Activated T-helper 2 cell treated with anti-CD3 and anti-CD28 coated beads, Interferon-gamma antibody, Interleukin-2, Interleukin-4, amounts not matched to agents 10 μg/mL and 5 μg/mL and 100 μg/mL, durations not matched to agents 14 hours and 24 hours and 36 hours (primary cell): ENCODE measurements at regions of chr15 and their contacts with region 1.

Region 1: DNA sequence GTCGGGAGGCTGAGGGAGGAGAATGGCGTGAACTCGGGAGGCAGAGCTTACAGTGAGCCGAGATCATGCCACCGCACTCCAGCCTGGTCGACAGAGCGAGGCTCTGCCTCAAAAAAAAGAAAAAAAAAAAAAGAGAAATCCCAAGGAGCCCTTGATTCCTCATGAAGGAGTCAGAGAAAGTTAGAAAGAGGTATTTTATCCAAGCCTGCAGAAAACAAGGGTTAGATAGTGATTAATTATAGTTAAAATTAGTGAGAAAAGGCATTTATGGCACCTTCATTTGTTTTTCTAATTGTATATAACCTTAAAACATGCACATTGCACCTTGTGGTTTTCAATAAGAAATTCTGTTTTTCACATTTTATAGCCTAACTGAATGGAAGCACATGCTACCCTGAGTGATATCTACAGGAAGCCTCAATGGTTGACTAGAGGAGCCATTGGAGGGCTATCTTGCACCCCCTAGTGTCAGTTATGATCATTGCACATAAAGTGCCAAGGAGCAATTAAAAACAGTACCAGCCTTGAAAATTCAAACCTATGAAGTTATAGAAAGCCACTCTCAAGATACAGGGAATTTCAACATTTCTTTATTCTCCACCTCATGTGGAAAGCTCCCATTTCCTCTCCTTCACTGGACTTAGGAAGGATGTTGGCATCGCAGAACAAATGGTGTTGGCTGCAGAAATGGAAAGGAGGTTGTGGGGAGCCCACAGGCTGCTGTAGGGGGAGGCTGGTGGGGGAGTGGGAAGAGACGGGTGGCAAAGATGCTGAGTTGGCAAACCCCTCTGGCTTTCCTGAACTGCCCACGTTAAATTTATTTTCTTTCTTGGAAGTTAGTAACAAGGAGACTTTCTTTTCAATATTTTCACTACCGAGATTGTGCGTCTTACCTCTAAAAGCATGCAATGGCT is 48.5 kb downstream of the ITGA11 start:
- DNase-seq: no peak
- H3K4me3 Mint-ChIP-seq: no peak overlapping the region
- H3K27ac Mint-ChIP-seq: no peak overlapping the region
- H3K4me1 Mint-ChIP-seq: peaks cover 14% of the 10 kb centered on the region
- H3K27me3 Mint-ChIP-seq: no peaks in the 10 kb centered on the region

Region 2: GRCh38 chr15:68252925-68253534 is 130.4 kb before region 1 on chr15:
- intact Hi-C with region 1: loop called (anchors 1 kb)
- DNase-seq: no peak
- H3K4me3 Mint-ChIP-seq: no peak overlapping the region
- H3K27ac Mint-ChIP-seq: no peak overlapping the region
- H3K4me1 Mint-ChIP-seq: peaks cover 2% of the 10 kb centered on the region
- H3K27me3 Mint-ChIP-seq: peaks cover 19% of the 10 kb centered on the region